Dendritic cell treated with granulocyte-macrophage colony-stimulating factor and Interleukin-4, amounts not matched to agents 40 ng/mL and 50 ng/mL, for 4 days (primary cell): ENCODE measurements at regions of chr5 and their contacts with region 1.

Region 1: DNA sequence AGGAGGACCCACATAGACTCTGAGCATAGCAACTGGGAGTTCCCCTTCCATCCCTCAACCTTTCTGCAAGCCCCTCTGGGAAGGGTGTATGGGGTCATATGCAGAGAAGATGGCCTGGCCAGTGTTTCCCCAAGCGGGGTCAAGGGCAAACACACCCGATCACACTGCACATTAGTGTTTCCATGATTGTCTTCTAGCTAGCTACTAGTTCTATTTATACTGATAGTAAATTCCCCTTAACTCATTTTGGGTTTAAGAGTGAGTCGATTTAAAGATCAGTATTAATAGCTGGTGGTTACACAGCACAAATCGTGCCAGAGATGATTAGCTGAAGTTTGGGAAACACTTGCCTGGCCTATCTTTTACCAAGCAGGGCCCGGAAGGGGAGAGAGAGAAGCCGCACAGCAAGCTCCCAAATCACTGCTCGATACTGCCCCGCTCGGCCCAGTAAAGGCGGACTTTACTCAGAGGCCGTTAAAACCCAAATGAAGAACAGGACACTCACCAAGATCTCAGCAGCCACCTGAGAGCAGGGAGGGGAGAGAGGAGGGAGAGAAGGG is 29.4 kb upstream of the TNIP1 start:
- H3K4me3 Mint-ChIP-seq: no peak overlapping the region
- H3K27ac Mint-ChIP-seq: no peak overlapping the region
- H3K4me1 Mint-ChIP-seq: peaks cover 8% of the 10 kb centered on the region
- H3K27me3 Mint-ChIP-seq: no peaks in the 10 kb centered on the region

Region 2: GRCh38 chr5:150517272-150518152 is 592.7 kb before region 1 on chr5:
- intact Hi-C with region 1: no loop called
- H3K4me3 Mint-ChIP-seq: no peak overlapping the region
- H3K27ac Mint-ChIP-seq: no peak overlapping the region
- H3K4me1 Mint-ChIP-seq: peaks cover 31% of the 10 kb centered on the region
- H3K27me3 Mint-ChIP-seq: no peaks in the 10 kb centered on the region

Region 3: DNA sequence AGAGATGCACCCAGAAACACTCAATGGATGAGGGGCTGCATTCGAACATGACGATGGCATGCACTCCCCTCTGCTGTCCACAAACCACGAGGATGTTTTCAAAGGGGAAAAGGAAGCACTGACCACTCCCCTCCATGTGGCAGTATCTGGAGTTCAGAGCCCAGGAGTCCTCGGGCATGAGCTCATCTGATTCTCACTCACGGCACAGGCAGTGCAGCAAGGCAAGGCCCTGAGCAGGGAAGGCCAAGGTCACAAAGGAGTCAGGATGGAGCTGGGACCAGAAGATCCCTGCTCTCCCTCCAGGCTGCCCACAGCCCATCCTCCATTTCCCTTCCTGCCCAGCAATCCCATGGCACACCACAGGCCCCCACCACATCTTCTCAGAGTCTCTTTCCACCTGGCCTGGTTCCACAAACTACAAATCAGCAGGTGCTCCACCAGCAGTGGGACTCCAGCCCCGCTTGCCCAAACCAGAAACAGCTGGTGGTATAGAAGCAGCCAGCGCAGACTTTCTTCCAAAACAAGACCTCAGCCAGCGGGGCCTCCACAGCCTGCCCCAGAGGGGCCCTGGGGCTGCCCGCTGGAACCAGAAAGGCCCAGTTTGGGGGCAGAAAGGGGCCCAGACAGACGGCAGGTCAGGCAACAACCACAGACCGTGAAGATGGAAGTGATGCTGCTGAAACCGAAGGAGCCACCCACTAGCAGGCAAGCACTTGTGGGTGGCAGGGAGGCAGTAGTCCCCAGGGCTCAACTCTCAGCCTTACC is 41.6 kb before region 1 on chr5:
- intact Hi-C with region 1: loop called (anchors 5 kb)
- H3K4me3 Mint-ChIP-seq: peak overlapping the region; percentile 13
- H3K27ac Mint-ChIP-seq: peak overlapping the region; percentile 79
- H3K4me1 Mint-ChIP-seq: peaks cover 95% of the 10 kb centered on the region
- H3K27me3 Mint-ChIP-seq: no peaks in the 10 kb centered on the region

Region 4: DNA sequence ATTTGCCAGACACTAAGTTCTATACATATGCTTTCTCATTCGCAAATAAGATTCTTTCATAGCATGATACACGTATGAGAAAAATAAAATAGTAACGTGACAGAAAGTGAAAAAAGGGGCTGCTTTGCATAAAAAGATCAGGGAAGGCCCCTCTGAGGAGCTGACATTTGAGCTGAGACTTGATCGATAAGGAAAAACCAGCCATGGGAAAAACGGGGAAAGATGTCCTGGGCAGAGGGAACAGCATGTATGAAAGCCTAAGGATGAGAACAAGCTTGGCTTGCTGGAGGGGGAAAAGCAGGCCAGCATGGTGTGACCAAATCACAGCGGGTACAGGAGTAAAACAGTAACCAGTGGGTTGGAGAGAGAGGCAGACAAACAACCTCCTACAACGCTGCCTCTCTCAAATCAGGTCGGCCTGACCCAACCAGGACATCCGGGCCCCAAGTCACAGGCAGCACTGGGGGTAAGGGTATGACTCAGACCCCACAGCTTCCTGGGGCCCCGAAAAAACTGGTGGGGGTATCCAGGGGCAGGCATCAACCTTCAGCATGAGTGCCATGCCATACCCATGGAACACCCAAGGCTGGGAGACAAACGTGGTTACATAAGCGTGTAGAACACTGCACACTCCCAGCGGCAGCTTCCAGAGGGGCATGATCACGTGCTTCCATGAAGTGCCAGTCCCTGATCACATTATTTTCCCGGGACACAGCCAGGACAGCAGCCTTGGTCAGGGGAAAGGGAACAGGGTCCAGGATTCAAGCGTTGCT is 31.5 kb before region 1 on chr5:
- intact Hi-C with region 1: no loop called
- H3K4me3 Mint-ChIP-seq: peak overlapping the region; percentile 37
- H3K27ac Mint-ChIP-seq: peak overlapping the region; percentile 55
- H3K4me1 Mint-ChIP-seq: peaks cover 76% of the 10 kb centered on the region
- H3K27me3 Mint-ChIP-seq: no peaks in the 10 kb centered on the region